B cell (primary cell): ENCODE measurements at regions of chr5 and their contacts with region 1.

Region 1: DNA sequence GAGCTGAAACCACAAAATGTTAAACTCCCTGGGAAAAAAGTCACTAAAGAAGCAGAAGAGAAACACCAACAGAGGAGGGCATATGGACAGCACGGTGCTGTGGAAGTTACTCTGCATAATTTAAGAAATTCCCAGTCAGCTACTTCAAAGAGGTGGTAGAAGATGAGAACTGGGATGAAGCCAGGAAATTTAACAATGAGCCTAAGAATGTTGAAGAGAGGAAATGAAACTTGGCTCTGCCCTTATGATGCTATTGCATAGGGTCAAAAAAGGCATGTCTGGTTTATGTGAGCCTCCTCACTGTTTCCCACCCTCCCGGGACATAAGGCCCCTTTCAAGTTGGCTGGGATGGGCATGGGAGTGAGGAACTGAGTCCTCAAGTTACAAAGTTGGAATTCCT is 25.4 kb upstream of the SNX18 start:
- DNase-seq: no peak
- ATAC-seq: no peak
- H3K4me3 ChIP-seq: no peak overlapping the region
- H3K4me3 Mint-ChIP-seq: no peak overlapping the region
- H3K27ac ChIP-seq: no peak overlapping the region
- H3K27ac Mint-ChIP-seq: no peak overlapping the region
- H3K4me1 ChIP-seq: no peaks in the 10 kb centered on the region
- H3K4me1 Mint-ChIP-seq: no peaks in the 10 kb centered on the region
- H3K27me3 ChIP-seq: peaks cover 0 to 5% (median 1%) of the 10 kb centered on the region in 4 experiments
- H3K27me3 Mint-ChIP-seq: peaks cover 8% of the 10 kb centered on the region
- CTCF ChIP-seq: no peak

Region 2: DNA sequence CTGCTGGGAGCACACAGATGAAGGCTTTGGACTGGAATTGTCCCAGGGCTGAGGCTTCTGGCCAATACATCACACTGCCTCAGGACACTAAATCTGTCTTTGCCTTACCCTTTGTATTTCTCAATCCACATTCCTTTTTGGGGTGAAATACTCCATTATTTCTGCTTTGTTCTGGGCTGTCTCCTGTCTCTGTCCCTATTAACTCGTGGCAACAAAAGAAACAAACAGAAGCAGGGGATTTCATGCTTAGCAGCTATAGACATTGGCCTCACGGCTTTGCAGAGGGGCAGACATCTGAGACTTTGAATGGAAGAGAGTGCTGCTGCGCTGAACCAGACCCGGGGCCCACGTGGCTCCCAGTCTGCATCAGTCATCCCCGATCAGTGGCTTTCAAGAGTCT is 311.6 kb before region 1 on chr5:
- CTCF ChIA-PET with region 1: no interaction called
- POLR2A ChIA-PET with region 1: no interaction called
- intact Hi-C with region 1: no loop called
- DNase-seq: no peak
- ATAC-seq: no peak
- H3K4me3 ChIP-seq: no peak overlapping the region
- H3K4me3 Mint-ChIP-seq: no peak overlapping the region
- H3K27ac ChIP-seq: no peak overlapping the region
- H3K27ac Mint-ChIP-seq: no peak overlapping the region
- H3K4me1 ChIP-seq: no peaks in the 10 kb centered on the region
- H3K4me1 Mint-ChIP-seq: peaks cover 6% of the 10 kb centered on the region
- H3K27me3 ChIP-seq: no peaks in the 10 kb centered on the region
- H3K27me3 Mint-ChIP-seq: no peaks in the 10 kb centered on the region
- CTCF ChIP-seq: no peak

Region 3: DNA sequence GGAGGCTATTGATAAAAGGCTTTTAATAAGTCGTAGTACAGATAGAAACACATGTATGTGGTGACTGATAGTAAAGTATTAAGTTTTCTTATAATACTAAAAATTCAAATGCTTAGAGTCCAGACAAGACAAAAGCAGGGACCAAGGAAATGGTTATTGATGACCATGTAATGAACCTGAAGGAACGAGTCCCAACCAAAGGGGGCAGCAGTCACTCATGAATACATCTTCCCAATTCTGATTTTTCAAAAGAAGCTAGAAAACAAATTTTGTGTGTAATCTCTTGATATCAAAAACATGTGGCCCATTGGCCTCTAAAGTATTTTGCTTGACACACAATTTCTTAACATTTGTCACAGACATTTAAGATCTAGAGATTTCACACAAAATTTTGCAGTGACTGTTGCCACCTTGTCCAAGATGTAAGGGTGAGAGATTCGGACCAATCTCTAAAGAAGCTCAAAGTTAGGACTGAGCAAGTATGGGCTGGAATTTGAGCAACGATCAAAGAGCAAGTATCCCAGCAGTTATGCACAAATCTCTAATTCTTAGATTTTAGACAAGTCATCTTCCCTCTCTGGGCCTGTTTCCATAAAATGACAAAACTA is 248.6 kb before region 1 on chr5:
- CTCF ChIA-PET with region 1: interaction called, 23 read pairs
- POLR2A ChIA-PET with region 1: no interaction called
- intact Hi-C with region 1: loop called (anchors 2 kb)
- DNase-seq: peak; percentile 43
- ATAC-seq: no peak
- H3K4me3 ChIP-seq: no peak overlapping the region
- H3K4me3 Mint-ChIP-seq: no peak overlapping the region
- H3K27ac ChIP-seq: no peak overlapping the region
- H3K27ac Mint-ChIP-seq: no peak overlapping the region
- H3K4me1 ChIP-seq: no peaks in the 10 kb centered on the region
- H3K4me1 Mint-ChIP-seq: peaks cover 2% of the 10 kb centered on the region
- H3K27me3 ChIP-seq: no peaks in the 10 kb centered on the region
- H3K27me3 Mint-ChIP-seq: no peaks in the 10 kb centered on the region
- CTCF ChIP-seq: peak; percentile 71

Region 4: DNA sequence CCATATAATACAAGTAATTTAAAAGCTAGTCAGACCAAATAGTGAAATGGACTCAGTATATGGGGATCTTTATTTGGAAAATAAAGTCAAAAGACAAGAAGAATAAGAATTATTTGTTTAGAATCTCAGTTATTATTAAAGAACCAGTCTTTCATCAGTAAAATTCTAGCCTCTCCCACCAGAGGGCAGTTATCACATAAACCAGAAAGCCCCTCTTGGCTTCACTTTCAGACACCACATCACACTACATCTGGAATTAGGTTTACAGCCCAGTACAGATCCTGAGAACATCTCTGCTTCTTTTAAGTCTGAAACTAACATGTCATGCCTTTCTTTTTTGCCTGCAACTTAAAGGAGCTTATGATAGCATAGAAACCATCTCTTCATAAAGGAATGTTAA is 48.9 kb before region 1 on chr5:
- CTCF ChIA-PET with region 1: interaction called, 19 read pairs
- POLR2A ChIA-PET with region 1: no interaction called
- intact Hi-C with region 1: no loop called
- DNase-seq: peak; percentile 28
- ATAC-seq: no peak
- H3K4me3 ChIP-seq: no peak overlapping the region
- H3K4me3 Mint-ChIP-seq: no peak overlapping the region
- H3K27ac ChIP-seq: no peak overlapping the region
- H3K27ac Mint-ChIP-seq: no peak overlapping the region
- H3K4me1 ChIP-seq: peaks cover 14 to 17% of the 10 kb centered on the region in 2 donors
- H3K4me1 Mint-ChIP-seq: peaks cover 23% of the 10 kb centered on the region
- H3K27me3 ChIP-seq: no peaks in the 10 kb centered on the region
- H3K27me3 Mint-ChIP-seq: no peaks in the 10 kb centered on the region
- CTCF ChIP-seq: peak; percentile 51

Region 5: DNA sequence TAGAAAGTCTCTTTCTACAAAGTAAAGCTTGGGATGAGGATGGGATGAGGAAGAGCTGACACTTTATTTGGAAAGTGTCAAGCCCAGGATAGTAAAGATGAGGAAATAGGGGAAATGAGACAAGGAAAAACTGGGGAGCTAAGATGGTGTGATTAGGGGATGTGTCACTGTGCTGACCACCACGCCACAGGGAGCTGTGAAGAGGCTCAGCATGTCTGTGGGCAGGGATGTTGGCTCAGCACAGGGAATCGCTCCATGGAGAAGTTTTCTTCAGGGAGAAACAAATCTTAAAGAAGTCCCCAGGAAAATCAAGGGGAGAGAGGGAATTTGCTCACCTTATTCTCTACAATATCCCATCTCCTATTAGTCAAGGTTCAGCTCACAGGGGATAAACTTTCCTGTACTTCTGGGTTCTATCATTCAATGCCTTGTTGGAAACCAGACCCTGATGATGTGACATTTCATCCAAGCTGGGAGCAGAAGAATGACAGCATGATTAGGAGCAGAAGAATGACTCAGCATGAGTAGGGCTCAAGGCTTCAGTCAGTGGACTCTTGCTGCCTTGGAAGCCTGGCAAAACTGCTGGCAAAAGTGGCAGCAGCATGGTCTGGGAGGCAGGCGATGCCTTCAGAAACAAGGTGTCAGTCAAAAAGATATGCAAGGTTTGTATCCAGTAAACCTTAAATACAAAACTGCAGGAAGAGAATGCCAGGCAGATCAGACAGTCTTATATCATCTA is 31.8 kb before region 1 on chr5:
- CTCF ChIA-PET with region 1: interaction called, 10 read pairs
- POLR2A ChIA-PET with region 1: no interaction called
- intact Hi-C with region 1: no loop called
- DNase-seq: no peak
- ATAC-seq: no peak
- H3K4me3 ChIP-seq: no peak overlapping the region
- H3K4me3 Mint-ChIP-seq: no peak overlapping the region
- H3K27ac ChIP-seq: no peak overlapping the region
- H3K27ac Mint-ChIP-seq: no peak overlapping the region
- H3K4me1 ChIP-seq: no peaks in the 10 kb centered on the region
- H3K4me1 Mint-ChIP-seq: no peaks in the 10 kb centered on the region
- H3K27me3 ChIP-seq: peaks cover 0 to 3% (median 0%) of the 10 kb centered on the region in 4 experiments
- H3K27me3 Mint-ChIP-seq: peaks cover 42% of the 10 kb centered on the region
- CTCF ChIP-seq: no peak

Region 6: DNA sequence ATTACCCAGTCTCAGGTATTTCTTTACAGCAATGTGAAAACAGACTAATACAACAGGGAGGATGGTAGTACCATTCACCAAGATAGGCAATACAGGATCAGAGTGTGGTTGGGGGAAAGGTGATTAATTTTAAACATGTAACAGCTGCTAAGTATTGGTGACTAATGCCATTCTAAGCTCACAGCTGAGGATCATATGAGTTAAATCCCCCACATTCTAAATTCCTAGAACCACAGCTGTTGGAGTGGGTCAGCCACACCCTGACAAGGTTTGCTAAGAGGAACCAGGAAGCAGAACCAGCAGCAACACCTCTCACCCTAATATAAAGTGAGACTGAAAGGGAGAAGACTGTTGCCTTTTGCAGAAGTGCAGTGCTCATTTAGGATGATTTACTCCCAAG is 11.9 kb before region 1 on chr5:
- CTCF ChIA-PET with region 1: interaction called, 19 read pairs
- POLR2A ChIA-PET with region 1: no interaction called
- intact Hi-C with region 1: no loop called
- DNase-seq: no peak
- ATAC-seq: no peak
- H3K4me3 ChIP-seq: no peak overlapping the region
- H3K4me3 Mint-ChIP-seq: no peak overlapping the region
- H3K27ac ChIP-seq: no peak overlapping the region
- H3K27ac Mint-ChIP-seq: no peak overlapping the region
- H3K4me1 ChIP-seq: no peaks in the 10 kb centered on the region
- H3K4me1 Mint-ChIP-seq: peaks cover 6% of the 10 kb centered on the region
- H3K27me3 ChIP-seq: peaks cover 0 to 8% (median 3%) of the 10 kb centered on the region in 4 experiments
- H3K27me3 Mint-ChIP-seq: peaks cover 40% of the 10 kb centered on the region
- CTCF ChIP-seq: no peak

Region 7: GRCh38 chr5:54867310-54867944 is 375.2 kb after region 1 on chr5:
- CTCF ChIA-PET with region 1: interaction called, 25 read pairs
- POLR2A ChIA-PET with region 1: no interaction called
- intact Hi-C with region 1: no loop called
- DNase-seq: peak; percentile 75
- ATAC-seq: peak; percentile 60
- H3K4me3 ChIP-seq: peak overlapping the region in 3 of 5 experiments; percentile 11 to 32 (median 20)
- H3K4me3 Mint-ChIP-seq: peak overlapping the region; percentile 32
- H3K27ac ChIP-seq: no peak overlapping the region
- H3K27ac Mint-ChIP-seq: no peak overlapping the region
- H3K4me1 ChIP-seq: peaks cover 3 to 5% of the 10 kb centered on the region in 2 donors
- H3K4me1 Mint-ChIP-seq: peaks cover 6% of the 10 kb centered on the region
- H3K27me3 ChIP-seq: peaks cover 0 to 5% (median 2%) of the 10 kb centered on the region in 4 experiments
- H3K27me3 Mint-ChIP-seq: peaks cover 34% of the 10 kb centered on the region
- CTCF ChIP-seq: peak; percentile 81